ENCODE measurements at regions of chr1 and their contacts with region 1.

Region 1: DNA sequence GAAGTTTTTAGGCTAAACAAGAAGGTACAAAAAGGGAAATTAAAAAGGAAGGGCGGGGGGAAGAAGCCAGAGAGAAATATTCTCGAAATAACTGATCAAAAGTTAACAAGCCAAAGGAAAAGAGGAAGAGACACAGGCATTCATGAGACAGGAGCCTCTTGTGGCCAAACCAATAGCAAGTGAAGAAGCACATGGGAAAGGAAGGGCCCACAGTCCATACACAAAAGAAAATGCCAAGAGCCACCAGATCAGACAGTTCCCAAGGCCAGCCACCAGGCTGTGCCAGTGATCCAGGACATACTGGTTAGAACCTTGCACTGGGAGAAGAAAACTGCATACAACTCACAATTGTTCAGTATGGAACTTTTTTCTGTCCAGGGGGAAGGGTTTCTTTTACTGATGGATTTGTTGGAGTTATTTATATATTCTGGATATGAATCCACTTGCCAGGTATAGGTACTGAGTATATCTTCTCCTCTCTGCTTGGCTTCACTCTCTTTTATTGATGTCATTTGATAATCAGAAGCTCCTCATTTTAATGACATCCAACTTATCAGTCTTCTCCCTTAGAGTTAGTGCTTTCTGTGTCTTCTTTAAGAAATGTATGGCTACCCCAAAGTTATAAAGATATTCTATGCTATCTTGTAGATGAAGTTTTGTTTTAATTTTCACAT is 76.8 kb downstream of the CD46 start:
- DNase-seq: peak; percentile 78
- ATAC-seq: no peak
- H3K4me3 Mint-ChIP-seq: no peak overlapping the region
- H3K27ac Mint-ChIP-seq: peak overlapping the region; percentile 45
- H3K4me1 Mint-ChIP-seq: peaks cover 97% of the 10 kb centered on the region
- H3K27me3 Mint-ChIP-seq: no peaks in the 10 kb centered on the region

Region 2: GRCh38 chr1:206808615-206809014 is 1020.0 kb before region 1 on chr1:
- CTCF ChIA-PET with region 1: no interaction called
- POLR2A ChIA-PET with region 1: no interaction called
- intact Hi-C with region 1: loop called in 1 of 2 experiments (anchors 10 kb)
- DNase-seq: peak; percentile 63
- ATAC-seq: peak; percentile 83
- H3K4me3 Mint-ChIP-seq: no peak overlapping the region
- H3K27ac Mint-ChIP-seq: no peak overlapping the region
- H3K4me1 Mint-ChIP-seq: peaks cover 39% of the 10 kb centered on the region
- H3K27me3 Mint-ChIP-seq: peaks cover 2% of the 10 kb centered on the region

Region 3: DNA sequence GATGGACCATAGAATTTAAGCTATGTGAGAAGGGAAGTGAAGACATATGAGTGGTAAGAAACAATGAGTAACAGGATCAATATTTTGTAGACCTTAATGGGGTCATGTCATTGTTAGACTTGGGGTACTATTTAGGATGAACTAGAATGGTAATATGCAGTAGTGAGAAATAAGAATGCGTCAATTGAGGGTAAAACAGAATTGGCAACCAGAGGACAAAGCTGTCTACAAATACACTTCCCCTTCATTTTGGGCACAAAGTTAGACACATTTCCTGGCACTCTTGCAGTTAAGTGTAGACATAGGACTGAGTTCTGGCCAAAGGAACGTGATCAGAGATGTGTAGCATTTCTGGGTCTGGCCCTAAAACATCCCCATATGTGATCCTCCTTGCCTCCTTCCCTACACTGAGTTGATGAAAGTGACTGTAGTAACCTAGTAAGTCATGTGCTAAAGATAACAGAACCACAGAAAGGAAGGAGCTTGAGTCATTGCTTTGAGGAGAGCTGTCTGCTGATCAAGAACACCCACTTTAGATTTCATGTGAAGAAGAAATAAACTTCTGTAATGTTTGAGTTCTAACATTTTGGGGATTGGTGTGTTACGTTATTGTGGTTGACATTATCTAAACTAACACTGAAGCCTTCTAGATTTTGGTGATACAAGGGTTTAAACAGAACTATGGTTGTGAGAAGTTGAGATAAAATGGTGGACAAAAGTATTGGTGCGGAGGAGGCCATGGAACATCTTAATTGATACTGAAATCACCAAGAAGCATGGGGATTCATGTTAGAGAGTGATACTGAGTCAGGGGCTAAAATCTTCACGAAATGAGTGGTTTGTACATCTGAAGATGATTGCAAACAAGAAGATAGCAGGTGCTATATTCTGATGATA is 465.4 kb before region 1 on chr1:
- CTCF ChIA-PET with region 1: no interaction called
- POLR2A ChIA-PET with region 1: no interaction called
- intact Hi-C with region 1: loop called in 1 of 2 experiments (anchors 1 kb)
- DNase-seq: peak; percentile 37
- ATAC-seq: peak; percentile 89
- H3K4me3 Mint-ChIP-seq: no peak overlapping the region
- H3K27ac Mint-ChIP-seq: no peak overlapping the region
- H3K4me1 Mint-ChIP-seq: peaks cover 2% of the 10 kb centered on the region
- H3K27me3 Mint-ChIP-seq: no peaks in the 10 kb centered on the region

Region 4: DNA sequence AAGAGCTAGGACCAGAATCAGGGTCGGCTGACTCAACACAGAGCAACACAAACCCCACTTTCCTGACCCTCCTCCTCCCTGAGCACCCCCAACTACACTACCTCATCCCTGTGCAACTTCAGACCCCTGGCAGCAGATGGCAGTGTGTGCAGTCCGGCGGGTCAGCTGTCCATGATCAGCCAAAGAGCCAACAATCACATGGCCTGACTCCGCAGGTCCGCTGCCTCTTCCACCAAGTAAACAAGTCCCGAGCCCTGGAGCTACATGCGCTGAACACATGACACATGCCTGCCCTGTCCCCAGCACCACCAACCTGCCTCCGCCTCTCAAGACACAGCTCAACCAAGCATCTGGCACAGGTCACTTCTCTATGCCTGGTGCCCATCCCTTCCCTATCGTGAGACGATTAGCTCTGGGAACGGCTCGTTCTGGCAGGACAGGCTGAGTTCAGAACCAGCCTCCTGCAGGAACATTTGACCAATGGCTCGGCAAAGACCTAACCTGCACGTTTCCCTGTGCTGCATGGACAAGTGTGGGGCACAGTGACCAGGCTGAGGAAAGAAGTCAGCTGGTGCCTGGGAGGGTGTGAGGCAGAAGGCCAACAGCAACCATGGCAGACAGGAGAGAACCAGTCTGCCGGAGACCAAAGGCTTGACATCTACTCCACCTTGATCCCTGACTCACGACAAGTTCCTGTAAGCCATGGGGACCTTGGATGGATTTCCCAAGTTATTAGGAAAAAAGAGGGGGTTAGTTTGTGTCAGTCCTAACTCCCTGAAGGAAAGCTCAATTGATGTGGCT is 16.5 kb before region 1 on chr1:
- CTCF ChIA-PET with region 1: interaction called, 10 read pairs
- POLR2A ChIA-PET with region 1: no interaction called
- intact Hi-C with region 1: loop called in 1 of 2 experiments (anchors 1 kb)
- DNase-seq: no peak
- ATAC-seq: no peak
- H3K4me3 Mint-ChIP-seq: no peak overlapping the region
- H3K27ac Mint-ChIP-seq: peak overlapping the region; percentile 81
- H3K4me1 Mint-ChIP-seq: peaks cover 70% of the 10 kb centered on the region
- H3K27me3 Mint-ChIP-seq: no peaks in the 10 kb centered on the region

Region 5: DNA sequence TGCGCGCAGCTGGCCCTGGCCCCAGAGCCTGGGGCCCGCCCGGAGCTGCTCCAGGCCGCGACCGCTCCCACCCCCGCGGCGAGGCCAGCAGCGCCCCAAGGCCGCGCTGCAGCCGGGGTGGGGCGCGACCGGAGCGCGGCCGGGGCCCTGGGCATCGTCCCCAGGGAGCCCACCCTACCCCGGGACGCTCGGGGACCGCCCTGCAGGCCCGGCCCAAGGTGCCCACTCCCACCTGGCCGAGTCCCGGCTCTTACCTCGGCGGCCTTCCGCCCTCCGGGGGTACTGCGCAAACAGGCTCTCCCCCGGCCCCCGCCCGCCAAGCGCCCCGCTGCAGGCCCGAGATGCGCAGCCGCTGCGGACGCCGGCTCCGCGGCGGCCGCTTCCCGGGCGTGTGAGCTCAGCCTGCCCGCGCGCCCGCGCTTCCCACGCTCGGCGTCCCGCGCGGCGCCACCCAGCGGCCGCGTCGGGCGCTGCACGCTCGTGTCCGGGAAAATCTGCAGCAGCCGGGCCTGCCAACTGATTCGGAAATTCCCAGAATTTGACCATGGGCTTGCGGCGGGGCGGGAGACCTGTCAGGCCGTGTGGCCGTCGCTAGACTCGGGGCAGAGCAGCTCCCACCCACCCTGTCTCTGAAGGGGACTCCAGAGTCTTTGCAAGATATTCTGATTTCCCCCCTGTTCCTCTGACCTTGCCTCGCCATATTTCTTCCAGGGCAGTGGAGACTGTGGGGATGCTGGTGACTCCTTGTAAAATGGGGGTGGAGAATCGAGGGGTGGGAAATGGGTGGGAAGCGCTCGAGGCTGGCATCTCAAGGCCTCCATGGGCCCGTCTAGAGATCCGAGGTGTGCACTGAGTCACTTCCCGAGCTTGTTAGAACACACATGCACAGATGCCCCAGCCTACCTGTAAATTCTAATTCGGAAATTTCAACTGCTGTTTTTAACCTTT is 40.4 kb after region 1 on chr1:
- CTCF ChIA-PET with region 1: interaction called, 297 read pairs
- POLR2A ChIA-PET with region 1: interaction called, 19 read pairs
- intact Hi-C with region 1: loop called (anchors 1 kb)
- DNase-seq: peak; percentile 82
- ATAC-seq: peak; percentile 49
- H3K4me3 Mint-ChIP-seq: peak overlapping the region; percentile 90
- H3K27ac Mint-ChIP-seq: peak overlapping the region; percentile 94
- H3K4me1 Mint-ChIP-seq: peaks cover 84% of the 10 kb centered on the region
- H3K27me3 Mint-ChIP-seq: no peaks in the 10 kb centered on the region

Region 6: GRCh38 chr1:208085655-208086515 is 257.3 kb after region 1 on chr1:
- CTCF ChIA-PET with region 1: no interaction called
- POLR2A ChIA-PET with region 1: no interaction called
- intact Hi-C with region 1: loop called in 1 of 2 experiments (anchors 2 kb)
- DNase-seq: no peak
- ATAC-seq: peak; percentile 14
- H3K4me3 Mint-ChIP-seq: peak overlapping the region; percentile 67
- H3K27ac Mint-ChIP-seq: peak overlapping the region; percentile 90
- H3K4me1 Mint-ChIP-seq: peaks cover 25% of the 10 kb centered on the region
- H3K27me3 Mint-ChIP-seq: no peaks in the 10 kb centered on the region

Region 7: GRCh38 chr1:208358651-208359050 is 530.0 kb after region 1 on chr1:
- CTCF ChIA-PET with region 1: no interaction called
- POLR2A ChIA-PET with region 1: no interaction called
- intact Hi-C with region 1: no loop called
- DNase-seq: no peak
- ATAC-seq: no peak
- H3K4me3 Mint-ChIP-seq: no peak overlapping the region
- H3K27ac Mint-ChIP-seq: no peak overlapping the region
- H3K4me1 Mint-ChIP-seq: no peaks in the 10 kb centered on the region
- H3K27me3 Mint-ChIP-seq: peaks cover 10% of the 10 kb centered on the region